Naive thymus-derived CD4-positive, alpha-beta T cell (primary cell): ENCODE measurements at regions of chr17 and their contacts with region 1.

Region 1: DNA sequence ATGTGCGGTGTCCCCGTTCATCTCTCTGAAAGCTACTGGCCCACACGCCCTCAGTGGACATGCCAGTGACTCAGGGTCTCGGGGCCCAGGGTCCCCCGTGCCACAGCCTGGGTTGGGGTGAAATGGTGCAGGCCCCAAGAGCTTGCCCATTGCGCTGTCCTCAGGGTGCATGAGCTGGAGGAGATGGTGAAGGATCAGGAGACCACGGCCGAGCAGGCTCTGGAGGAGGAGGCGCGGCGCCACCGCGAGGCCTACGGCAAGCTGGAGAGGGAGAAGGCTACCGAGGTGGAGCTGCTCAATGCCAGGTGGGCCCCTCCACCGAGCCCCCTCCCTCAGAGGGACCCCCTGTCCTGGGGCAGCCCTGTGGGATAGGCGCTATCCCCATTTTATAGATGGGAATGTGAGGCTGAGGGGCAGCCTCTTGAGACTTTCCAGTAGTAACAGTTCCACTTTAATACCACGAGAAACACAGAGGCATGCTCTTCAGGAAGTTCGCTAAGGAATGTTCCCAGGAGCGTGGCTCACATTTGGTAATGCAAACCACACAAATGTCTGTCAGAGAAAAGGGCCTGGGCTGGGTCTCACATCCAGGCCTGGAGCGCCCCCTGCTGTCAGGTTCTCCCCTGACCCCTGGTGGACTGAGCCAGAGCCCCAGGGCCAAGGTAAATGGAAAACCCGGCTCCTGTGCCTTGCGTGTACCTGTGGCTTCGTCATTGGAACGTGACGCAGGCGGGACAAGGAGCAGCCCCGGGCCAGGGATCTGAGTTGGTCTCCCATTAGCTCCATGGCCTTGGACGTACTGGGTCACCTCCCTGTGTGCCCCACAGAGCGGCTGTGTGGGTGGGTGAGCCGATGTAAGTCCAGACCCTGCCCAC is 133.7 kb downstream of the RAB11FIP4 start:
- DNase-seq: peak; percentile 67 to 89 (median 77)
- ATAC-seq: peak; percentile 87
- H3K4me3 ChIP-seq: no peak overlapping the region
- H3K4me3 Mint-ChIP-seq: no peak overlapping the region
- H3K27ac ChIP-seq: no peak overlapping the region
- H3K27ac Mint-ChIP-seq: peak overlapping the region in 1 of 9 donors; percentile 11
- H3K4me1 ChIP-seq: no peaks in the 10 kb centered on the region
- H3K4me1 Mint-ChIP-seq: peaks cover 0 to 2% (median 0%) of the 10 kb centered on the region in 7 donors
- H3K27me3 ChIP-seq: no peaks in the 10 kb centered on the region
- H3K27me3 Mint-ChIP-seq: no peaks in the 10 kb centered on the region

Region 2: GRCh38 chr17:30132615-30133014 is 1392.5 kb before region 1 on chr17:
- CTCF ChIA-PET with region 1: no interaction called
- POLR2A ChIA-PET with region 1: no interaction called
- intact Hi-C with region 1: no loop called
- DNase-seq: no peak
- ATAC-seq: no peak
- H3K4me3 ChIP-seq: no peak overlapping the region
- H3K4me3 Mint-ChIP-seq: no peak overlapping the region
- H3K27ac ChIP-seq: no peak overlapping the region
- H3K27ac Mint-ChIP-seq: no peak overlapping the region
- H3K4me1 ChIP-seq: no peaks in the 10 kb centered on the region
- H3K4me1 Mint-ChIP-seq: peaks cover 2 to 39% (median 22%) of the 10 kb centered on the region in 7 donors
- H3K27me3 ChIP-seq: no peaks in the 10 kb centered on the region
- H3K27me3 Mint-ChIP-seq: no peaks in the 10 kb centered on the region

Region 3: GRCh38 chr17:31008374-31009041 is 516.7 kb before region 1 on chr17:
- CTCF ChIA-PET with region 1: no interaction called
- POLR2A ChIA-PET with region 1: no interaction called
- intact Hi-C with region 1: loop called in 1 of 2 experiments (anchors 1 kb)
- DNase-seq: peak; percentile 16 to 60 (median 40)
- ATAC-seq: peak; percentile 77
- H3K4me3 ChIP-seq: peak overlapping the region; percentile 75
- H3K4me3 Mint-ChIP-seq: peak overlapping the region; percentile 86 to 97 (median 92)
- H3K27ac ChIP-seq: peak overlapping the region; percentile 61
- H3K27ac Mint-ChIP-seq: peak overlapping the region; percentile 21 to 94 (median 88)
- H3K4me1 ChIP-seq: peaks cover 0 to 9% of the 10 kb centered on the region in 2 donors
- H3K4me1 Mint-ChIP-seq: peaks cover 8 to 23% (median 18%) of the 10 kb centered on the region in 7 donors
- H3K27me3 ChIP-seq: no peaks in the 10 kb centered on the region
- H3K27me3 Mint-ChIP-seq: peaks cover 0 to 31% (median 0%) of the 10 kb centered on the region in 5 donors

Region 4: GRCh38 chr17:31197991-31198390 is 327.2 kb before region 1 on chr17:
- CTCF ChIA-PET with region 1: no interaction called
- POLR2A ChIA-PET with region 1: no interaction called
- intact Hi-C with region 1: no loop called
- DNase-seq: no peak
- ATAC-seq: no peak
- H3K4me3 ChIP-seq: no peak overlapping the region
- H3K4me3 Mint-ChIP-seq: no peak overlapping the region
- H3K27ac ChIP-seq: no peak overlapping the region
- H3K27ac Mint-ChIP-seq: no peak overlapping the region
- H3K4me1 ChIP-seq: no peaks in the 10 kb centered on the region
- H3K4me1 Mint-ChIP-seq: peaks cover 0 to 4% (median 0%) of the 10 kb centered on the region in 7 donors
- H3K27me3 ChIP-seq: no peaks in the 10 kb centered on the region
- H3K27me3 Mint-ChIP-seq: no peaks in the 10 kb centered on the region

Region 5: GRCh38 chr17:31378638-31379037 is 146.5 kb before region 1 on chr17:
- CTCF ChIA-PET with region 1: interaction called, 3 read pairs
- POLR2A ChIA-PET with region 1: no interaction called
- intact Hi-C with region 1: loop called in 1 of 2 experiments (anchors 1 kb)
- DNase-seq: no peak
- ATAC-seq: no peak
- H3K4me3 ChIP-seq: no peak overlapping the region
- H3K4me3 Mint-ChIP-seq: no peak overlapping the region
- H3K27ac ChIP-seq: no peak overlapping the region
- H3K27ac Mint-ChIP-seq: no peak overlapping the region
- H3K4me1 ChIP-seq: no peaks in the 10 kb centered on the region
- H3K4me1 Mint-ChIP-seq: peaks cover 0 to 3% (median 0%) of the 10 kb centered on the region in 7 donors
- H3K27me3 ChIP-seq: no peaks in the 10 kb centered on the region
- H3K27me3 Mint-ChIP-seq: no peaks in the 10 kb centered on the region

Region 6: DNA sequence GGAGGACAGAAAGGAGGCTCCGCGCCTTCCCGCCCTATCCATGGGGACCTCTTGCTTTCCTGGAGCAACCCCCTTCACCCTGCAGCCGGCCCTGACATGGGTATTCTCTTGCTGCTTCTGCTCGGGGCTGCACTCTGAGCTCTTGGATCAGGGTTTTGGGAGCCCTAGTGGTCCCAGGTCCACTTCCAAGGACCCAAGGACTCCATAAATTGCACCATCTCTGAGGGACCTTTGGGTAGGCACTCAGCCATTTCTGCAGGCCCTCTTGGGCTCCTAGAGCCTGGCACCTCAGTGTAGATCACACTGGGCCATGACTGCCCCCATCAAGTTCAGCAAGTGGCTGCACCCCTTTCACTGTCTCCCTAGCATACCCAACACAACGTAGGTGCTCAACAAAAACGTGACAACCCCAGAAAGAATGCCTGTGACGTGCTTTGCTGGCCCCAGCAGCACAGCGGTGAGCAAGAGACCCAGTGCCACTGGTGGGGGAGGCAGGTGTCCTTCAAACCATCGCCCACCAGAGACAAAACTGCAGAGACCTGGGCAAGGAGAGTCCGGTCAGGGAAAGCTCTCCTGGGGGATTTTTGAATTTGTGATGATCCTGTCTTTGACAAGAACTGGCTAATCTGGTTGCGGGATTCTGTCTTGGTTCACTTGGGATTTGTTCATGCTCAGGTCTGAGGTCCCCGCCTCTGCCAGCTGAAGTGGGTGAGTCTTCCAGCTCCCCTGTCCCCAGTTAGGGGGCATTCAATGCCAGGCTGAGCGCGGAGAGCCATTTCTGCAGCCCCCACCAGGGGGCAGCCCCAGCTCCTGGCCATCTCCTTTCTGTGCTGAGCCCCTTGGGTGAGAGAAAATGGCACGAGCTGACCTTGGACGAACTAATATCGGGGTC is 136.1 kb before region 1 on chr17:
- CTCF ChIA-PET with region 1: interaction called, 11 read pairs
- POLR2A ChIA-PET with region 1: no interaction called
- intact Hi-C with region 1: loop called (anchors 1 kb)
- DNase-seq: peak in 7 of 9 donors; percentile 15 to 52 (median 38)
- ATAC-seq: peak; percentile 67
- H3K4me3 ChIP-seq: no peak overlapping the region
- H3K4me3 Mint-ChIP-seq: peak overlapping the region in 2 of 10 donors; percentile 21 to 56
- H3K27ac ChIP-seq: no peak overlapping the region
- H3K27ac Mint-ChIP-seq: no peak overlapping the region
- H3K4me1 ChIP-seq: no peaks in the 10 kb centered on the region
- H3K4me1 Mint-ChIP-seq: peaks cover 10 to 17% (median 16%) of the 10 kb centered on the region in 7 donors
- H3K27me3 ChIP-seq: no peaks in the 10 kb centered on the region
- H3K27me3 Mint-ChIP-seq: peaks cover 22 to 50% (median 28%) of the 10 kb centered on the region in 5 donors

Region 7: DNA sequence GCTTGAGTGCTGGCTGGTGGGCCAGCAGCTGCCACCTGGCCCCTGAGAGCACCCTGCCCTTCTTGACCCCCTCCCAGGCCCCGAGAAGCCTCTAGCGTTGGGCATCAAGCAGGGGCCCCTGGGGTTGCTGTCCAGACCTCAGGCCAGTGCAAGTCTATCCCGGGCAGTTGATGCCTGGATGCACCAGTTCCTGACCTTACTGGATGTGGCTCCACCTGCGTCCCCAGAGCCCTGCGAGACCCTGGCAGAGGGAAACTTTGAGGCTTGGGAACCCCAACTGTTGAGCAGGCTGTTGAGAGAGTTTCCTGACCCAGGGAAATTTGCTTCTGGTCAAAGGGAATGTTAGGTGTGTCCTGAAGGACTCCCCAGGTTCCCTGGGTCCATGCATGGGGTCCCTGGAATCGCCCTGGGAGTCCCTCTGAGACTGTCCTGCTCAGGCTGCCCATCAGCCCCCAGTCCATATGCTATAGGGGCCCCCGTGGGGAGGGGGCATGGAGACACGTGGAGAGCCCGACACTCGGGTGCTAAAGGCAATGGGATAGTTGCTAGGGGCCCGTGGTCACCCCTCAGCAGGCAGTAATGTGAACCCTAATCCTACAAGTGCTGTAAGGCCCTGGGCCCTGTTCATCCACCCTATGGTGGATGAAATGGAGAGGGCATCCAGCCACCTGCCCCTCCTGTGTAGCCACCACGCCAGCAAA is 87.3 kb before region 1 on chr17:
- CTCF ChIA-PET with region 1: interaction called, 20 read pairs
- POLR2A ChIA-PET with region 1: interaction called, 4 read pairs
- intact Hi-C with region 1: loop called (anchors 1 kb)
- DNase-seq: no peak
- ATAC-seq: no peak
- H3K4me3 ChIP-seq: no peak overlapping the region
- H3K4me3 Mint-ChIP-seq: no peak overlapping the region
- H3K27ac ChIP-seq: no peak overlapping the region
- H3K27ac Mint-ChIP-seq: no peak overlapping the region
- H3K4me1 ChIP-seq: peaks cover 8% of the 10 kb centered on the region in 2 donors
- H3K4me1 Mint-ChIP-seq: peaks cover 0 to 17% (median 15%) of the 10 kb centered on the region in 7 donors
- H3K27me3 ChIP-seq: no peaks in the 10 kb centered on the region
- H3K27me3 Mint-ChIP-seq: peaks cover 0 to 13% (median 0%) of the 10 kb centered on the region in 5 donors

Region 8: GRCh38 chr17:31570951-31571892 is 46.1 kb after region 1 on chr17:
- CTCF ChIA-PET with region 1: no interaction called
- POLR2A ChIA-PET with region 1: no interaction called
- intact Hi-C with region 1: no loop called
- DNase-seq: no peak
- ATAC-seq: no peak
- H3K4me3 ChIP-seq: no peak overlapping the region
- H3K4me3 Mint-ChIP-seq: no peak overlapping the region
- H3K27ac ChIP-seq: no peak overlapping the region
- H3K27ac Mint-ChIP-seq: no peak overlapping the region
- H3K4me1 ChIP-seq: no peaks in the 10 kb centered on the region
- H3K4me1 Mint-ChIP-seq: peaks cover 0 to 2% (median 0%) of the 10 kb centered on the region in 7 donors
- H3K27me3 ChIP-seq: no peaks in the 10 kb centered on the region
- H3K27me3 Mint-ChIP-seq: no peaks in the 10 kb centered on the region